ENCODE measurements at regions of chr19 and their contacts with region 1.

Region 1: DNA sequence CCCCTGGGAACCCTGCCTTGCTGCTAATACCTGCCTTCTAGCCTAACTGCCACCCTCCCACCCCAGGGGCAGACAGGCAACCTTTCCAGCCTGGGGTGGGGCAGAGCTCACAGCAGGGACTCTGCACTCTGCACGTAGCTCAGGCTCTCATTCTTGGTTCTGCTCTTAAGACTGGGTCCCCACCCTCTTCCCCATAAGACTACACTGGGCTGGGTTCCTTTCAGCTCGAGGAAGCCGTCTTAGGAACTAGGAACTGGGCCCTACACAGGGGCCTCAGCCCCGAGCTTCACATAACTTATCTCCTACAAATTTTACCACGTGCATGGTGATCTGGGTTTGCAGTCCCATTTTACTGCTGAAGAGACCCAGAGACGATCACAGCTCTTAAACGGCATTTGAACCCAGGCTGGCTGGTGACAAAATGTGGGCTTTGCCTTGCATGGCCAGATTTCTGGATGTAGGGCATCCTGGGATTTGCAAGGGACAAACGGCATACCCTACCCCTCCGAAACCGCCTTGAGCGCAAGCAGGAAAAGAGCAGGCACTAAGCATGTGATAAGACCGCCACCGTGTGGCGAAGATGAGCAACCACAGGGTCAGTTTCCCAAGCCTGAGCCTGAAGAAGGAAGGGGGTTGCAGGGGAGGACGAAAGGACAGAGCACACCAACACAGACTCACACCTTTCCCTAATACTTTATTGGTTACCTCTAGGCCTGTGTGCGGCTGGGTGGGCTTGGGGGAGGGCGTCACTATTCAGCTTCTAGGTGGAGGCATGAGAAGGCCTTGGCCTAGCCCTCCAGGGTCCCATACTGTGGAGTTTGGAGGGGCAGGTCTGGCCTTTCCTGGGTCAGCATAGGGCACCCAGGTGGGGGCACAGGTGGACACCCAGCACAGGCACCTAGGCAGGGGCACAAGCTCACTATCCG is 5.1 kb downstream of the JUNB start:
- DNase-seq: peak; percentile 45 to 90 (median 70)
- ATAC-seq: peak in 1 of 4 experiments; percentile 6
- H3K4me3 ChIP-seq: peak overlapping the region; percentile 33 to 35
- H3K4me3 Mint-ChIP-seq: peak overlapping the region; percentile 68 to 92 (median 76)
- H3K27ac ChIP-seq: peak overlapping the region; percentile 56
- H3K27ac Mint-ChIP-seq: peak overlapping the region; percentile 92 to 96
- H3K4me1 ChIP-seq: peaks cover 25 to 46% of the 10 kb centered on the region in 2 experiments
- H3K4me1 Mint-ChIP-seq: peaks cover 37 to 40% (median 38%) of the 10 kb centered on the region in 3 donors
- H3K27me3 ChIP-seq: no peaks in the 10 kb centered on the region
- H3K27me3 Mint-ChIP-seq: no peaks in the 10 kb centered on the region

Region 2: DNA sequence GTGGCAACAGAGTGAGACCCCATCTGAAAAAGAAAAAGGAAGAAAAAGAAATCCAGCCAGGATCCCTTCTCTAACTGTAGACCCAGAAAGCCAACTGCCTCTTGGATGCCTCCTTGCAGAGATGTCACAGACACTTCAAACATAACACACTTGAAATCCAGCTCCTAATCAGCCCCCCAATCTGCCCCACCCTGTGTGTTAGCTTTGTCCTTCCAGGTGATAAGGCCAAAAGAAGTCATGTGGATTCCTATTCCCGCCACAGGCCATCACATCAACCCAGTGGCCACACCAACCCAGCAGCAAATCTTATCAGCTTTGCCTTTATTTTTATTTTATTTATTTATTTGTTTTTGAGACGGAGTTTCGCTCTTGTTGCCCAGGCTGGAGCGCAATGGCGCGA is 36.7 kb before region 1 on chr19:
- CTCF ChIA-PET with region 1: interaction called, 33 to 48 read pairs
- POLR2A ChIA-PET with region 1: interaction called in 1 of 2 experiments, 9 read pairs
- DNase-seq: no peak
- ATAC-seq: no peak
- H3K4me3 ChIP-seq: no peak overlapping the region
- H3K4me3 Mint-ChIP-seq: no peak overlapping the region
- H3K27ac ChIP-seq: no peak overlapping the region
- H3K27ac Mint-ChIP-seq: no peak overlapping the region
- H3K4me1 ChIP-seq: peaks cover 0 to 9% of the 10 kb centered on the region in 2 experiments
- H3K4me1 Mint-ChIP-seq: peaks cover 0 to 11% (median 8%) of the 10 kb centered on the region in 3 donors
- H3K27me3 ChIP-seq: peaks cover 0 to 32% of the 10 kb centered on the region in 2 experiments
- H3K27me3 Mint-ChIP-seq: peaks cover 8 to 16% of the 10 kb centered on the region in 2 donors

Region 3: GRCh38 chr19:12766051-12766521 is 30.3 kb before region 1 on chr19:
- CTCF ChIA-PET with region 1: interaction called, 33 to 48 read pairs
- POLR2A ChIA-PET with region 1: interaction called, 3 to 9 read pairs
- DNase-seq: peak in 32 of 35 experiments; percentile 48 to 89 (median 76)
- ATAC-seq: peak; percentile 61 to 80 (median 74)
- H3K4me3 ChIP-seq: no peak overlapping the region
- H3K4me3 Mint-ChIP-seq: no peak overlapping the region
- H3K27ac ChIP-seq: no peak overlapping the region
- H3K27ac Mint-ChIP-seq: no peak overlapping the region
- H3K4me1 ChIP-seq: peaks cover 0 to 20% of the 10 kb centered on the region in 2 experiments
- H3K4me1 Mint-ChIP-seq: peaks cover 3 to 6% (median 5%) of the 10 kb centered on the region in 3 donors
- H3K27me3 ChIP-seq: peaks cover 0 to 8% of the 10 kb centered on the region in 2 experiments
- H3K27me3 Mint-ChIP-seq: no peaks in the 10 kb centered on the region

Region 4: DNA sequence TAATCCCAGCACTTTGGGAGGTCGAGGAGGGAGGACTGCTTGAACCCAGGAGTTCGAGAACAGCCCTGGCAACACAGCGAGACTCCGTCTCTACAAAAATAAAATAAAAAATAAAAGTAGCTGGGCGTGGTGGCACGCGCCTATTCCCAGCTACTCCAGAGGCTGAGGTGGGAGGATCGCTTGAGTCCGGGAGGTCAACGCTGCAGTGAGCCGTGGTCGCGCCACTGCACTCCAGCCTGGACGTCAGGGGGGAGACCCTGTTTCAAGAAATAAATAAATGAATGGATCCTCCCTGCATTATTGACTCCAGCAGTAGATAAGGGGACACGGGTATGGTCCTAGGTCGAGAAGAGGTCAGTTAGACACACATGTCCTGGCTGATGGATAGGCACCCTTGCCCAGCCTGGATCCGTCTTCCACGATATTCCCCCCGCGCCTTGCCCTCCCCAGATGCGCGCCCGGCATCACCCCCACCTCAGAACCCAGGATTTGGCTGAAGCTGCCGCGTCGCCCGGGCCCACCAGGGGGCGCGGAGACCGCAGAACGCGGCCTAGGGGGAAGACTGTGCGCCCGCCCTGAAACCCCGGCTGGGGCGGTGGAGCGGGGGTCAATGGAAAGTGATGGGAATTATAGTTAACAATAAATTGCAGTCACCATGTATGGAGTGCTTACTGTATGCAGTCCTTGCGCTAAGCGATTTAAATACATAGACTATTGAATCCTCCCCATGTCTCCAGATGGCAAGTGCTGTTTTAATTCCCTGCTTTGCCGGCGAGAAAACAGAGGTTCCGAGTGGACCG is 19.0 kb before region 1 on chr19:
- CTCF ChIA-PET with region 1: interaction called, 16 to 32 read pairs
- POLR2A ChIA-PET with region 1: interaction called, 9 to 45 read pairs
- DNase-seq: peak; percentile 51 to 90 (median 71)
- ATAC-seq: peak in 3 of 4 experiments; percentile 30 to 31 (median 31)
- H3K4me3 ChIP-seq: peak overlapping the region; percentile 65 to 88
- H3K4me3 Mint-ChIP-seq: peak overlapping the region; percentile 77 to 83 (median 82)
- H3K27ac ChIP-seq: peak overlapping the region; percentile 89
- H3K27ac Mint-ChIP-seq: peak overlapping the region; percentile 88
- H3K4me1 ChIP-seq: peaks cover 13 to 62% of the 10 kb centered on the region in 2 experiments
- H3K4me1 Mint-ChIP-seq: peaks cover 38 to 46% (median 41%) of the 10 kb centered on the region in 3 donors
- H3K27me3 ChIP-seq: no peaks in the 10 kb centered on the region
- H3K27me3 Mint-ChIP-seq: no peaks in the 10 kb centered on the region

Region 5: DNA sequence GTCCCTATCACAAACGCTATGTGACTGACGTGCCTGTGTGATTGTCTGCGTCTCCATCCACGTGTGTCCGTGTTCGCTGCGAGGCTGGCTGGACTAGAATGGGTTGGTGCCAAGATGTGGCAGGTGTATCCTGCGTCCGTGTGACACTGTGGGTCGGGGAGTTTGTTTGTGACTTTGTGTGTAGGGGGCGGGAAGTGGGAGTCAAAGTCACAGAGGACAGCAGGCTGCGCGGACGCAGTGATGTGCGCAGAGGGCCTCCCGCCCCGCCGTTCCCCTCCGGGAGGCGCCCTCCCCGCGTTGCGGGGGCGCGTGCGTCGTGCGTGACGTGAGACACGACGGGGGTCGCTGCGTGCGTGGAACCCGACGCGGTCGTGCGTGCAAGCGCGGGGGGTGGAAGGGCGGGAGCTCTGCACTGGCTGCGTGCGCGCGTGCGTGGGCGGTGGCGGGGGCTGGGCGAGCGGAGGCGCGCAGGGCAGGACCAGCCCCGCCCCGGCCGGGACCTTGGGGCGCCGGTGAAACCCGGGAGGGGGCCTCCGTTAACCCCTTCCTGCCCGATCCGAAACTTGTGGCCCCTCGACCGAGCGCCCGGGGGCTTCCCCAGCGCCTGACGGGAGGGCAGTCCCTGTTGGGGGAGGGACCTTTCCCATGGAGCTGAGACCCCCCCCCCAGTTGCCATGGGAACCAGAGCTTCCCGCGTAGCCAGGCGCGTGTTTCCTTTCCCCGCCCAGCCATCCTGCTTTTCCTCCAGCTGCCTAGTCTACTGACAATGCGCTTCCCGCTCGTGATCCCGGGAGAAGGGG is 14.0 kb before region 1 on chr19:
- CTCF ChIA-PET with region 1: interaction called, 16 to 32 read pairs
- POLR2A ChIA-PET with region 1: interaction called, 9 to 45 read pairs
- DNase-seq: peak; percentile 85 to 99 (median 96)
- ATAC-seq: peak; percentile 72 to 79 (median 77)
- H3K4me3 ChIP-seq: peak overlapping the region; percentile 62 to 66
- H3K4me3 Mint-ChIP-seq: peak overlapping the region; percentile 85 to 95 (median 89)
- H3K27ac ChIP-seq: peak overlapping the region; percentile 100
- H3K27ac Mint-ChIP-seq: peak overlapping the region; percentile 100
- H3K4me1 ChIP-seq: peaks cover 43 to 84% of the 10 kb centered on the region in 2 experiments
- H3K4me1 Mint-ChIP-seq: peaks cover 32 to 43% (median 40%) of the 10 kb centered on the region in 3 donors
- H3K27me3 ChIP-seq: no peaks in the 10 kb centered on the region
- H3K27me3 Mint-ChIP-seq: no peaks in the 10 kb centered on the region

Measured in T-cell (primary cell).